Right lobe of liver (tissue), 6 donors: ENCODE measurements at regions of chr1 and their contacts with region 1.

Region 1: DNA sequence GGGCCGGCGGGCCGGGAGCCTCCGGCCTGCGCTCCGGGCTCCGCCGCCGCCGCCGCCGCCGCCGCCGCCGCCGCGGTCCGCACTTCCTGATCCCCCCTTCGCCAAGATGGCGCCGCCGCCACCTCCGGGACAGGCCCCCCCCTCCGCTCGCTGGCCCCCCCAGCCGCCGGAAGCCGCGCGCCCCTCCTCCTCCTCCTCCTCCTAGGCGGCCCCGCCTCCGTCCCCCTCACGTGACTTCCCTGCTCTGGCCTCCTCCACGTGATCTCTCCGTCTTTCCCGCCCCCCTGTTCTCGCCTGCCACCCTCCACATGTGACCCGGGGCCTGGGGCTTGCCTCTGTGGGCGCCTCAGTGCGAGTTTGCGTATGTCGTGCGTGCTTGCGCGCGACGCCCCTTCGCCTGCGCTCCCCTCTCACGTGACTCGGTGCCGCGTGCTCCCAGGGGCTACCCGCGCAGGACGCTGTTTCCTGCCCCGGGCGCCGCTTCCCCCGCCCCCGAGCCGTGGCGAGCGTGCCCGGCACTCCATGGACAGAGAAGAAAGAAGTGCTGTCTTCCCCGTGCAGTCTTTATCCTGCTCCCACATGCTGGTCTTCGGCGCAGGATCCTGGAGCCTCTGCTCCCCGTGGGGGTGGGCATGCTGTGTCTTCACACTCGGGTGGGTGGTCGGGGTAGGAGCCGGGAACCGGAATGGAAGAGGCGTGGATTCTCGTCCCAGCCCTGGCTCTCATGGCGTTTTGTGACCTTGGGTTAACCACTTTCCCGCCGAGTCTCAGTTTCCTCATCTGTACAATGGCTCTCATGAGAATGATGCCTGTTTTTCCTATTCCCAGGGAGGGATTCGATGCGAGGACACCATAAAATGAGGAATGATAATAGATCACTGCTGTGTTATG is at the start of gene UBE2Q1:
- DNase-seq: peak; percentile 99 to 100 (median 100)
- ATAC-seq: peak; percentile 90 to 94 (median 93)
- H3K4me3 ChIP-seq: peak within 1 kb of the TSS; percentile 81 to 97 (median 95)
- H3K27ac ChIP-seq: peak within 1 kb of the TSS; percentile 80 to 88 (median 83)
- H3K4me1 ChIP-seq: peaks cover 0 to 13% (median 3%) of the 10 kb centered on the region in 4 donors
- H3K27me3 ChIP-seq: no peaks in the 10 kb centered on the region
- CTCF ChIP-seq: no peak
- POLR2A ChIP-seq: peak; percentile 65
- total RNA-seq, gene UBE2Q1: 23.6 to 48.6 (median 33.1) TPM

Region 2: DNA sequence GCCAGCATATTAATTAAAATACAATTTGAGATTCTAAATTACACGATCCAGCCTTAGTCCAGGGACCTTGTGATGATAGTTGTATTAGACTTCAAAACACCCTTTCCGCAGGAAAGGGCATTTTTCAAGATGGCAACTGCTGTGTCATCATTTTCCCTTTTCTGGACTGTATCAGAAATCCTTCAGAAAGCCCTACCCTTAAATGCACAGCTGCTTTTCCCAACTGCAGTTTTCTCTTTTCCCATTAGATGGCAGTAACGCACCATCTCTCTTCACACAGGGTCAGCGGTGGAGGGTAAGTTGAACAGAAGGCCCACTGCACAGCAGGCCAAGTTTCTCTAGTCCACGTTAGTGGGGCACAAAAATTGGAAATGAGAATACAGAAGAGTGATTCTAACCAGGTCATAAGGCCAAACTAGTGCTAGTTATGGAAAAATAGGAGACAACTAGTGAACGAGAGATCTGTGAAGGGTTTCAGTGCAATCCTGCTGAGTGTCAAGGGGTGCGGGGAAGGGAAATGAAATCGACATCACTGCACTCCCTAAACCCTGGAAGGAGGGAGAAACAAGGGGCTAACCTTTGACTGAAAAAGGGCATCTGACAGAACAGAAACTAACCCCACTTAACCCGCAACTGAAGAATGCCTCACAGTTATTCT is 78.9 kb before region 1 on chr1:
- intact Hi-C with region 1: loop called in 1 of 2 experiments (anchors 10 kb)
- DNase-seq: peak in 1 of 3 donors; percentile 56
- ATAC-seq: peak; percentile 94 to 97 (median 96)
- H3K4me3 ChIP-seq: no peak overlapping the region
- H3K27ac ChIP-seq: no peak overlapping the region
- H3K4me1 ChIP-seq: peaks cover 0 to 7% (median 0%) of the 10 kb centered on the region in 4 donors
- H3K27me3 ChIP-seq: no peaks in the 10 kb centered on the region
- CTCF ChIP-seq: peak; percentile 93 to 99 (median 94)
- POLR2A ChIP-seq: no peak

Region 3: GRCh38 chr1:154751690-154752089 is 192.9 kb after region 1 on chr1:
- intact Hi-C with region 1: loop called in 1 of 2 experiments (anchors 10 kb)
- DNase-seq: peak in 1 of 3 donors; percentile 33
- ATAC-seq: peak in 2 of 4 donors; percentile 72 to 83
- H3K4me3 ChIP-seq: no peak overlapping the region
- H3K27ac ChIP-seq: no peak overlapping the region
- H3K4me1 ChIP-seq: no peaks in the 10 kb centered on the region
- H3K27me3 ChIP-seq: no peaks in the 10 kb centered on the region
- CTCF ChIP-seq: no peak
- POLR2A ChIP-seq: no peak

Region 4: GRCh38 chr1:154884869-154885701 is 326.3 kb after region 1 on chr1:
- intact Hi-C with region 1: loop called in 1 of 2 experiments (anchors 10 kb)
- DNase-seq: no peak
- ATAC-seq: peak in 2 of 4 donors; percentile 22 to 38
- H3K4me3 ChIP-seq: no peak overlapping the region
- H3K27ac ChIP-seq: no peak overlapping the region
- H3K4me1 ChIP-seq: no peaks in the 10 kb centered on the region
- H3K27me3 ChIP-seq: no peaks in the 10 kb centered on the region
- CTCF ChIP-seq: no peak
- POLR2A ChIP-seq: no peak